SK-N-SH (cell line): ENCODE measurements at regions of chr19 and their contacts with region 1.

Region 1: GRCh38 chr19:40633207-40633606 is 32.0 kb downstream of the LTBP4 start:
- DNase-seq: no peak
- H3K4me3 ChIP-seq: no peak overlapping the region
- H3K27ac ChIP-seq: no peak overlapping the region
- H3K4me1 ChIP-seq: peaks cover 0 to 3% of the 10 kb centered on the region in 2 experiments; a peak in 1 of 4 replicates
- H3K27me3 ChIP-seq: no peaks in the 10 kb centered on the region
- CTCF ChIP-seq: no peak
- EP300 ChIP-seq: no peak
- RAD21 ChIP-seq: no peak

Region 2: GRCh38 chr19:40139533-40140287 is 493.5 kb before region 1 on chr19:
- CTCF ChIA-PET with region 1: interaction called, 12 read pairs
- POLR2A ChIA-PET with region 1: no interaction called
- DNase-seq: peak; percentile 55
- H3K4me3 ChIP-seq: no peak overlapping the region; a peak in 1 of 4 replicates
- H3K27ac ChIP-seq: no peak overlapping the region
- H3K4me1 ChIP-seq: no peaks in the 10 kb centered on the region
- H3K27me3 ChIP-seq: peaks cover 35% of the 10 kb centered on the region; the same call in 1 of the 2 replicates
- CTCF ChIP-seq: peak; percentile 84
- EP300 ChIP-seq: no peak
- RAD21 ChIP-seq: peak; percentile 97

Region 3: DNA sequence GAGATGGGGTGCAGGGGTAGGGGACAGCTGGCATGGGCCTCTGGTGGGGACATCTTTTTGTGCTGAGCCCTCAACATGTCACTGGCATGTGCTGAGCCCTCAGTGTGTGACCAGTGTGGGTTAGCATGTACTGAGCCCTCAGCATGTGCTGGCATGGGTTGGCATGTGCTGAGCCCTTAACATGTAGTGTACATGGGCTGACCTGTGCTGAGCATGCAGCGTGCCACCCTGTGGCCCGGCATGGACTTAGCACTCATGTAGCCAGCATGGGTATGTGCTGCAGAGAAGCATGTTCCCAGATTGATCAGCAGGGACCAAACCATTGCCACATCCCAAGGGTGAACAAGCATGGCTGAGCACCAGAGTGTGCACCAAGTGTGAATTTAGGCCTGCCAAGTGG is 254.7 kb before region 1 on chr19:
- CTCF ChIA-PET with region 1: no interaction called
- POLR2A ChIA-PET with region 1: no interaction called
- DNase-seq: peak; percentile 17
- H3K4me3 ChIP-seq: no peak overlapping the region
- H3K27ac ChIP-seq: no peak overlapping the region
- H3K4me1 ChIP-seq: no peaks in the 10 kb centered on the region
- H3K27me3 ChIP-seq: no peaks in the 10 kb centered on the region
- CTCF ChIP-seq: no peak
- EP300 ChIP-seq: no peak
- RAD21 ChIP-seq: no peak

Region 4: GRCh38 chr19:40529093-40529954 is 103.9 kb before region 1 on chr19:
- CTCF ChIA-PET with region 1: interaction called, 18 read pairs
- POLR2A ChIA-PET with region 1: no interaction called
- DNase-seq: peak; percentile 99
- H3K4me3 ChIP-seq: peak overlapping the region; percentile 44 to 60
- H3K27ac ChIP-seq: peak overlapping the region in 1 of 2 experiments; percentile 70; a peak in 2 of 4 replicates
- H3K4me1 ChIP-seq: peaks cover 0 to 11% of the 10 kb centered on the region in 2 experiments; a peak in 1 of 4 replicates
- H3K27me3 ChIP-seq: no peaks in the 10 kb centered on the region
- CTCF ChIP-seq: peak; percentile 79
- EP300 ChIP-seq: no peak
- RAD21 ChIP-seq: peak; percentile 51

Region 5: DNA sequence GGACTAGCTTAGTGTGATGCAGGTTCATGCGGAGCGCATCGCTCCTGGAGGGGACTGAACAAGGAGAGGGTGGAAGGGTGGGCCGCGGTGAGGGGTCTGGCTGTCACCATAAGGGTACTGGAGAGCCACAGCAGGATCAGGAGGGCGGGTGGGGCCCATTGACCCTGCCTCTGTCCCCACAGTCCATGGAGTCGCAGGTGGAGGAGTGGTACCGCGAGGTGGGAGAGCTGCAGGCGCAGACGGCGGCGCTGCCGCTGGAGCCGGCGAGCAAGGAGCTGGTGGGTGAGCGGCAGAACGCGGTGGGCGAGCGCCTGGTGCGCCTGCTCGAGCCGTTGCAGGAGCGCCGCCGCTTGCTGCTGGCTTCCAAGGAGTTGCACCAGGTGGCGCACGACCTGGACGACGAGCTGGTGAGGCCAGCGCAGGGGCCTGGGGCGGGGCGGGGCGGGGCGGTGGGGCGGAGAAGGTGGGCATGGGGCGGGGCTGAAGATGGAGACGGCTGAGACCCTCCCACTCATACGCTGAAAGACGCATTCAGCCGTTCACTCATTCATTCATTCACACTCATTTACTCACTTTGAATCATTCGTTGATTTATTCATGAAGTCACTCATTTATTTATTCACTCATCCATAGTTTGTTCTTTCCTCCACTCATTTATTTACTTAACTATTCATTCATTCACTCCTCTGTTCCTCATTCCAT is 84.0 kb before region 1 on chr19:
- CTCF ChIA-PET with region 1: interaction called, 28 read pairs
- POLR2A ChIA-PET with region 1: no interaction called
- DNase-seq: peak; percentile 95
- H3K4me3 ChIP-seq: peak overlapping the region in 1 of 2 experiments; percentile 10; a peak in 2 of 4 replicates
- H3K27ac ChIP-seq: no peak overlapping the region
- H3K4me1 ChIP-seq: peaks cover 3 to 4% of the 10 kb centered on the region in 2 experiments; a peak in 1 of 4 replicates
- H3K27me3 ChIP-seq: no peaks in the 10 kb centered on the region
- CTCF ChIP-seq: peak; percentile 40
- EP300 ChIP-seq: no peak
- RAD21 ChIP-seq: peak; percentile 50

Region 6: GRCh38 chr19:40578442-40578908 is 54.7 kb before region 1 on chr19:
- CTCF ChIA-PET with region 1: interaction called, 11 read pairs
- POLR2A ChIA-PET with region 1: no interaction called
- DNase-seq: peak; percentile 60
- H3K4me3 ChIP-seq: no peak overlapping the region
- H3K27ac ChIP-seq: no peak overlapping the region
- H3K4me1 ChIP-seq: peaks cover 4 to 10% of the 10 kb centered on the region in 2 experiments; a peak in 2 of 4 replicates
- H3K27me3 ChIP-seq: no peaks in the 10 kb centered on the region
- CTCF ChIP-seq: no peak
- EP300 ChIP-seq: no peak
- RAD21 ChIP-seq: no peak

Region 7: GRCh38 chr19:40609561-40610395 is 23.4 kb before region 1 on chr19:
- CTCF ChIA-PET with region 1: interaction called, 176 read pairs
- POLR2A ChIA-PET with region 1: interaction called, 7 read pairs
- DNase-seq: peak; percentile 99
- H3K4me3 ChIP-seq: peak overlapping the region; percentile 53 to 56
- H3K27ac ChIP-seq: peak overlapping the region in 1 of 2 experiments; percentile 93; a peak in 2 of 4 replicates
- H3K4me1 ChIP-seq: peaks cover 12 to 38% of the 10 kb centered on the region in 2 experiments; a peak in 2 of 4 replicates
- H3K27me3 ChIP-seq: no peaks in the 10 kb centered on the region
- CTCF ChIP-seq: no peak
- EP300 ChIP-seq: no peak
- RAD21 ChIP-seq: no peak

Region 8: DNA sequence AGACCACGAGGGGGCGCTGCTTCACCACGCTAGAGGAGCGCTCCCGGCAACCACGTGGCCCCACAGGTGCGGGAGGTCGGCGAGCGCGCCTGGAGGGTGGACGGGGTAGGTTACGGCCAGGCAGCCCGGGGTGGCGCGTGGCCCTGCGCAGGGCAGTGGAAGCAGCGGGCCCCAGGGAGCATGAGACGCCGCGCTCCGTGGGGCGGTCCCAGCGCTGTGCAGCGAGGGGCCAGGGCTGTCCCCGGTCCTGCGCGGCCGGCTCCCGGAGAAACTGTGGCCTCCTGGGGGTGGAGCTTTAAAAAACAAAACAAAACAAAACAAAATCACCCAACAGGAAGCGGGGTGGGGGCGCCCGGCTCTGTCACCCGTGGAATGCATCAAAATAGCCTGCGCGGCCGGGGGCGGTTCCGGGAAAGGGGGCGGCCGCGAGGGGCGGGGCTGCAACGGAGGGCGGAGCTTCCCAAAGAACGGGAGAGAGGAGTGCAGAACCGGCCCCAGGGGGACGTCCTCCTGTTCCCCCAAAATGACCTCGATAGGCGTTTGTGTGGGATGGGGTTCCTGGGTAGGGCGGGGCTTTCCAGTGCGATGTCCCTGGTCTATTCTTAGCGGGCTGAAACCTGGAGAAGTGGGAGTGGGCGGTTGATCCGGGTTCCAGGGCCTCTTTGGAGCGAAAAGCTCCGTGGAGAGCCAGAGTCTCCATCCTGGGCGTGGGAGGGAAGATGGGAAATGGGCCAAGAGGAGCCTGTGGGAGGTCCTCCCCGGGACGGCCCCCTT is 29.9 kb after region 1 on chr19:
- CTCF ChIA-PET with region 1: interaction called, 12 read pairs
- POLR2A ChIA-PET with region 1: interaction called, 5 read pairs
- DNase-seq: peak; percentile 93
- H3K4me3 ChIP-seq: peak overlapping the region; percentile 61 to 91
- H3K27ac ChIP-seq: peak overlapping the region; percentile 62 to 67
- H3K4me1 ChIP-seq: peaks cover 6 to 10% of the 10 kb centered on the region in 2 experiments; a peak in 3 of 4 replicates
- H3K27me3 ChIP-seq: no peaks in the 10 kb centered on the region
- CTCF ChIP-seq: no peak; the same call in 1 of the 2 replicates
- EP300 ChIP-seq: no peak
- RAD21 ChIP-seq: peak; percentile 89

Region 9: GRCh38 chr19:40677156-40677555 is 43.9 kb after region 1 on chr19:
- CTCF ChIA-PET with region 1: no interaction called
- POLR2A ChIA-PET with region 1: no interaction called
- DNase-seq: no peak
- H3K4me3 ChIP-seq: no peak overlapping the region
- H3K27ac ChIP-seq: no peak overlapping the region
- H3K4me1 ChIP-seq: no peaks in the 10 kb centered on the region
- H3K27me3 ChIP-seq: no peaks in the 10 kb centered on the region
- CTCF ChIP-seq: no peak
- EP300 ChIP-seq: no peak
- RAD21 ChIP-seq: no peak

Region 10: GRCh38 chr19:40705362-40705651 is 72.1 kb after region 1 on chr19:
- CTCF ChIA-PET with region 1: no interaction called
- POLR2A ChIA-PET with region 1: no interaction called
- DNase-seq: no peak
- H3K4me3 ChIP-seq: no peak overlapping the region
- H3K27ac ChIP-seq: no peak overlapping the region
- H3K4me1 ChIP-seq: no peaks in the 10 kb centered on the region
- H3K27me3 ChIP-seq: no peaks in the 10 kb centered on the region
- CTCF ChIP-seq: no peak
- EP300 ChIP-seq: no peak
- RAD21 ChIP-seq: no peak

Region 11: DNA sequence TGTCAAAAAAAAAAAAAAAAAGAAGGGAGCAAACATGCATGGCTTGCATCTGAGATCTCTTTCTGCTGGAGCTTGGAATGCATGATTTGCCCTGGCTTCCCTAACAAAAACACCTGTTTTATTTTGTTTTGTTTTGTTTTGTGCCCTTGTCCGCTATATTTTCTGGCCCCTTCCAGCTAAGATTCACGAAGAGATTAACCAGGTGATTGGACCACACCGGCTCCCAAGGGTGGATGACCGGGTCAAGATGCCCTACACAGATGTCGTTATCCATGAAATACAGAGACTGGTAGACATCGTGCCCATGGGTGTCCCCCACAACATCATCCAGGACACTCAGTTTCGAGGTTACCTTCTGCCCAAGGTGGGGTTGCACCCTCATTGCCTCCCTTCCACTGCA is 264.8 kb after region 1 on chr19:
- CTCF ChIA-PET with region 1: no interaction called
- POLR2A ChIA-PET with region 1: no interaction called
- DNase-seq: no peak
- H3K4me3 ChIP-seq: no peak overlapping the region
- H3K27ac ChIP-seq: no peak overlapping the region
- H3K4me1 ChIP-seq: no peaks in the 10 kb centered on the region
- H3K27me3 ChIP-seq: peaks cover 19% of the 10 kb centered on the region; the same call in 1 of the 2 replicates
- CTCF ChIP-seq: no peak
- EP300 ChIP-seq: no peak
- RAD21 ChIP-seq: no peak